ENCODE measurements at regions of chr3 and their contacts with region 1.

Region 1: GRCh38 chr3:71069797-71070196 is 513.7 kb downstream of the FOXP1 start:
- DNase-seq: peak; percentile 76
- H3K4me3 ChIP-seq: no peak overlapping the region
- H3K27ac ChIP-seq: no peak overlapping the region
- H3K4me1 ChIP-seq: peaks cover 47% of the 10 kb centered on the region
- CTCF ChIP-seq: peak; percentile 88

Region 2: DNA sequence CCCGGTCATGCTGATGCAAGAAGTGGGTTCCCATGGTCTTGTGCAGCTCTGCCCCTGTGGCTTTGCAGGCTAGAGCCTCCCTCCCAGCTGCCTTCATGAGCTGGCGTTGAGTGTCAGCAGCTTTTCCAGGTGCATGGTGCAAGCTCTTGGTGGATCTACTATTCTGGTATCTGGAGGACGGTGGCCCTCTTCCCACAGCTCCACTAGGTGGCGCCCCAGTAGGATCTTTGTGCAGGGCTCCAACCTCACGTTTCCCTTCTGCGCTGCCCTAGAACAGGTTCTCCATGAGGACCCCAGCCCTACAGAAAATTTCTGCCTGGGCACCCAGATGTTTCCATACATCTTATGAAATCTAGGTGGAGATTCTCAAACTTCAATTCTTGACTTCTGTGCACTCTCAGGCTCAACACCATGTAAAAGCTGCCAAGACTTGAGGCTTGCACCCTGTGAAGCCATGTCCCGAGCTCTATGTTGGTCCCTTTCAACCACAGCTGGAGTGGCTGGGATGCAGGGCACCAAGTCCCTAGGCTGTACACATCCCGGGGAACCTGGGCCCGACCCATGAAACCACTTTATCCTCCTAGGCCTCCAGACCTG is 519.0 kb before region 1 on chr3:
- CTCF ChIA-PET with region 1: no interaction called
- POLR2A ChIA-PET with region 1: no interaction called
- intact Hi-C with region 1: loop called (anchors 5 kb)
- DNase-seq: peak; percentile 57
- H3K4me3 ChIP-seq: no peak overlapping the region
- H3K27ac ChIP-seq: no peak overlapping the region
- H3K4me1 ChIP-seq: no peaks in the 10 kb centered on the region
- CTCF ChIP-seq: peak; percentile 81

Region 3: GRCh38 chr3:71512000-71512399 is 442.2 kb after region 1 on chr3:
- CTCF ChIA-PET with region 1: no interaction called
- POLR2A ChIA-PET with region 1: no interaction called
- intact Hi-C with region 1: loop called (anchors 5 kb)
- DNase-seq: peak; percentile 77
- H3K4me3 ChIP-seq: no peak overlapping the region
- H3K27ac ChIP-seq: peak overlapping the region; percentile 14
- H3K4me1 ChIP-seq: peaks cover 38% of the 10 kb centered on the region
- CTCF ChIP-seq: peak; percentile 83